T-cell (primary cell): ENCODE measurements at regions of chr19 and their contacts with region 1.

Region 1: GRCh38 chr19:53853707-53854106 is 14.0 kb upstream of the MYADM start:
- DNase-seq: no peak
- ATAC-seq: no peak
- H3K4me3 ChIP-seq: no peak overlapping the region
- H3K4me3 Mint-ChIP-seq: no peak overlapping the region
- H3K27ac ChIP-seq: no peak overlapping the region
- H3K27ac Mint-ChIP-seq: no peak overlapping the region
- H3K4me1 ChIP-seq: peaks cover 3 to 5% of the 10 kb centered on the region in 2 experiments
- H3K4me1 Mint-ChIP-seq: peaks cover 6 to 10% (median 7%) of the 10 kb centered on the region in 3 donors
- H3K27me3 ChIP-seq: peaks cover 2 to 43% of the 10 kb centered on the region in 2 experiments
- H3K27me3 Mint-ChIP-seq: peaks cover 22 to 34% of the 10 kb centered on the region in 2 donors

Region 2: DNA sequence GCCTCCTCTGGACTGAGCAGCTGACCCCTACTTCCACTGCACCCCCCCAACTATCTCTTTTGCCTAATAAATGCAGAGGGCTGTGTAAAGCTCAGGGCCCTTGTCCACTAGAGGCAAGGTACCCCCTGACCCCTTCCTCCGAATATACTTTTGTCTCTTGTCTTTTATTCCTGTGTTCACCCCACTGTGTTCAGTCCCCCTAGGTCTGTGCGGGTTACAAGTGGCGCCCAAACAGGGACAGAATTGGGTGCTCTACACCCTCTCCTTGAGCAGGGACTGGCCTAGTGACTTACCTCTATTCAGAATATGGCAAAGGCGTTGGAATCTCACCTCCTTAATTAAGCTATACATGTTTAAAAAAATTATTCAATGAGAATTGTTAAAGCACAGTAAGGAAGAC is 1882.1 kb before region 1 on chr19:
- CTCF ChIA-PET with region 1: no interaction called
- POLR2A ChIA-PET with region 1: interaction called in 1 of 2 experiments, 11 read pairs
- DNase-seq: peak in 8 of 35 experiments; percentile 3 to 42 (median 11)
- ATAC-seq: no peak
- H3K4me3 ChIP-seq: peak overlapping the region in 1 of 2 donors; percentile 54
- H3K4me3 Mint-ChIP-seq: no peak overlapping the region
- H3K27ac ChIP-seq: no peak overlapping the region
- H3K27ac Mint-ChIP-seq: no peak overlapping the region
- H3K4me1 ChIP-seq: no peaks in the 10 kb centered on the region
- H3K4me1 Mint-ChIP-seq: no peaks in the 10 kb centered on the region
- H3K27me3 ChIP-seq: no peaks in the 10 kb centered on the region
- H3K27me3 Mint-ChIP-seq: no peaks in the 10 kb centered on the region

Region 3: GRCh38 chr19:54248016-54248601 is 394.4 kb after region 1 on chr19:
- CTCF ChIA-PET with region 1: no interaction called
- POLR2A ChIA-PET with region 1: no interaction called
- DNase-seq: peak in 3 of 35 experiments; percentile 10 to 48 (median 12)
- ATAC-seq: peak; percentile 37 to 61 (median 54)
- H3K4me3 ChIP-seq: no peak overlapping the region
- H3K4me3 Mint-ChIP-seq: peak overlapping the region in 2 of 3 donors; percentile 4 to 52
- H3K27ac ChIP-seq: peak overlapping the region; percentile 41
- H3K27ac Mint-ChIP-seq: peak overlapping the region; percentile 70 to 81
- H3K4me1 ChIP-seq: peaks cover 0 to 14% of the 10 kb centered on the region in 2 experiments
- H3K4me1 Mint-ChIP-seq: peaks cover 11 to 14% (median 12%) of the 10 kb centered on the region in 3 donors
- H3K27me3 ChIP-seq: peaks cover 0 to 18% of the 10 kb centered on the region in 2 experiments
- H3K27me3 Mint-ChIP-seq: peaks cover 3 to 24% of the 10 kb centered on the region in 2 donors